GM12878 (cell line): ENCODE measurements at regions of chr2 and their contacts with region 1.

Region 1: GRCh38 chr2:164000176-164000575 is 264.4 kb upstream of the FIGN start:
- DNase-seq: no peak
- ATAC-seq: no peak
- H3K4me3 ChIP-seq: no peak overlapping the region
- H3K27ac ChIP-seq: no peak overlapping the region
- H3K4me1 ChIP-seq: no peaks in the 10 kb centered on the region
- H3K27me3 ChIP-seq: no peaks in the 10 kb centered on the region; a peak in 1 of 4 replicates
- CTCF ChIP-seq: no peak
- EP300 ChIP-seq: no peak
- POLR2A ChIP-seq: no peak
- RAD21 ChIP-seq: no peak

Region 2: GRCh38 chr2:163970058-163970813 is 29.9 kb before region 1 on chr2:
- CTCF ChIA-PET with region 1: no interaction called
- POLR2A ChIA-PET with region 1: no interaction called
- RAD21 ChIA-PET with region 1: no interaction called
- SMC1A ChIA-PET with region 1: no interaction called
- in situ Hi-C with region 1: no loop called
- intact Hi-C with region 1: no loop called
- DNase-seq: no peak
- ATAC-seq: no peak
- H3K4me3 ChIP-seq: no peak overlapping the region
- H3K27ac ChIP-seq: no peak overlapping the region
- H3K4me1 ChIP-seq: no peaks in the 10 kb centered on the region
- H3K27me3 ChIP-seq: no peaks in the 10 kb centered on the region
- CTCF ChIP-seq: no peak
- EP300 ChIP-seq: no peak
- POLR2A ChIP-seq: no peak
- RAD21 ChIP-seq: no peak

Region 3: DNA sequence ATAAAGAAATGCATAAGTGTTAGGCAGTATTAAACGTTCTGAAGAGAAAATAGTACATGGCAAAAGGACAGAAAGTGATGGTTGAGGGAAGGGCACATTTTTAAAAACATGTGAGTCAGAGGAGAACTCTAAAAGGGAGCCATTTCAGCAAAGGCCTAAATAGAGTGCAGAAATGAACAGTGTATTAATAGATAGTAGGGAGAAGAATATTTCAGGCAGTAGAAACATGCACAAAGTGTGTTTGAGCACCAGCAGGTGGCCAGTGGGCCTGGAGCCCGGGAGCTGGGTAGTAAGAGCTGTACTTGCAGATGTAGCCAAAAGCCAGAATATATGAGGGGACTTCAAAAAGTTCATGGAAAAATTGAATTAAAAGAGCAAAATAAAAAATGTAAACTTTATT is 23.7 kb after region 1 on chr2:
- CTCF ChIA-PET with region 1: no interaction called
- POLR2A ChIA-PET with region 1: no interaction called
- RAD21 ChIA-PET with region 1: no interaction called
- SMC1A ChIA-PET with region 1: no interaction called
- in situ Hi-C with region 1: no loop called
- intact Hi-C with region 1: loop called (anchors 2 kb)
- DNase-seq: no peak
- ATAC-seq: no peak
- H3K4me3 ChIP-seq: no peak overlapping the region
- H3K27ac ChIP-seq: no peak overlapping the region
- H3K4me1 ChIP-seq: no peaks in the 10 kb centered on the region
- H3K27me3 ChIP-seq: peaks cover 0 to 2% of the 10 kb centered on the region in 2 experiments; a peak in 1 of 4 replicates
- CTCF ChIP-seq: no peak
- EP300 ChIP-seq: no peak
- POLR2A ChIP-seq: no peak
- RAD21 ChIP-seq: no peak

Region 4: DNA sequence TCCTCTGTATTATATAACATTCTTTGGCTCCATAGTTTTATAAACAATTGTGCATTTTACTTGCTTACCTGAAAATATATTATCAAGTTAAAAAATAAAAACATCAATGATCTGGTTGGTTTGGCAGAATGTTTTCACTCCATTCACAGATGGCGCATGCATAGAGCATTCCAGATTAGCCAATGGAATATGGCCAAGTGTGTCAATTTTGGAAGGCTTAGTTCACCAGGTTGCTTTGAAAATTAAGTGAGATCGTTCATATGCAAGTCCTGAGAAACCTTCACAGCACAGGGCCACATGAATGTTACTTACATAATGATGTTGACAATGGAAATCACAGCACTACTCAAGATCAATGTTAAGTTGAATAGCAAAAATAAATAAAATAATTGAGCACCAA is 285.4 kb after region 1 on chr2:
- CTCF ChIA-PET with region 1: no interaction called
- POLR2A ChIA-PET with region 1: no interaction called
- RAD21 ChIA-PET with region 1: no interaction called
- SMC1A ChIA-PET with region 1: no interaction called
- in situ Hi-C with region 1: no loop called
- intact Hi-C with region 1: no loop called
- DNase-seq: no peak
- ATAC-seq: no peak
- H3K4me3 ChIP-seq: no peak overlapping the region
- H3K27ac ChIP-seq: no peak overlapping the region
- H3K4me1 ChIP-seq: no peaks in the 10 kb centered on the region
- H3K27me3 ChIP-seq: no peaks in the 10 kb centered on the region
- CTCF ChIP-seq: no peak
- EP300 ChIP-seq: no peak
- POLR2A ChIP-seq: no peak
- RAD21 ChIP-seq: no peak